Activated B cell treated with CpG ODN at 0.5 μM for 24 hours (primary cell): ENCODE measurements at regions of chr2 and their contacts with region 1.

Region 1: GRCh38 chr2:78845664-78846185 is 179.8 kb upstream of the REG3G start:
- DNase-seq: no peak
- ATAC-seq: no peak
- H3K4me3 Mint-ChIP-seq: no peak overlapping the region
- H3K27ac Mint-ChIP-seq: no peak overlapping the region
- H3K4me1 Mint-ChIP-seq: no peaks in the 10 kb centered on the region
- H3K27me3 Mint-ChIP-seq: no peaks in the 10 kb centered on the region
- CTCF ChIP-seq: no peak

Region 2: GRCh38 chr2:78465707-78466106 is 380.0 kb before region 1 on chr2:
- CTCF ChIA-PET with region 1: no interaction called
- POLR2A ChIA-PET with region 1: no interaction called
- intact Hi-C with region 1: no loop called
- DNase-seq: no peak
- ATAC-seq: no peak
- H3K4me3 Mint-ChIP-seq: no peak overlapping the region
- H3K27ac Mint-ChIP-seq: no peak overlapping the region
- H3K4me1 Mint-ChIP-seq: no peaks in the 10 kb centered on the region
- H3K27me3 Mint-ChIP-seq: no peaks in the 10 kb centered on the region
- CTCF ChIP-seq: no peak

Region 3: GRCh38 chr2:78699696-78700095 is 146.0 kb before region 1 on chr2:
- CTCF ChIA-PET with region 1: no interaction called
- POLR2A ChIA-PET with region 1: no interaction called
- intact Hi-C with region 1: no loop called
- DNase-seq: no peak
- ATAC-seq: no peak
- H3K4me3 Mint-ChIP-seq: no peak overlapping the region
- H3K27ac Mint-ChIP-seq: no peak overlapping the region
- H3K4me1 Mint-ChIP-seq: no peaks in the 10 kb centered on the region
- H3K27me3 Mint-ChIP-seq: no peaks in the 10 kb centered on the region
- CTCF ChIP-seq: no peak

Region 4: GRCh38 chr2:78861546-78861945 is 15.8 kb after region 1 on chr2:
- CTCF ChIA-PET with region 1: no interaction called
- POLR2A ChIA-PET with region 1: no interaction called
- intact Hi-C with region 1: loop called (anchors 1 kb)
- DNase-seq: no peak
- ATAC-seq: no peak
- H3K4me3 Mint-ChIP-seq: no peak overlapping the region
- H3K27ac Mint-ChIP-seq: no peak overlapping the region
- H3K4me1 Mint-ChIP-seq: no peaks in the 10 kb centered on the region
- H3K27me3 Mint-ChIP-seq: no peaks in the 10 kb centered on the region
- CTCF ChIP-seq: no peak

Region 5: GRCh38 chr2:78873526-78873925 is 27.8 kb after region 1 on chr2:
- CTCF ChIA-PET with region 1: no interaction called
- POLR2A ChIA-PET with region 1: no interaction called
- intact Hi-C with region 1: no loop called
- DNase-seq: no peak
- ATAC-seq: no peak
- H3K4me3 Mint-ChIP-seq: no peak overlapping the region
- H3K27ac Mint-ChIP-seq: no peak overlapping the region
- H3K4me1 Mint-ChIP-seq: no peaks in the 10 kb centered on the region
- H3K27me3 Mint-ChIP-seq: no peaks in the 10 kb centered on the region
- CTCF ChIP-seq: no peak